ENCODE measurements at regions of chr9 and their contacts with region 1.

Region 1: DNA sequence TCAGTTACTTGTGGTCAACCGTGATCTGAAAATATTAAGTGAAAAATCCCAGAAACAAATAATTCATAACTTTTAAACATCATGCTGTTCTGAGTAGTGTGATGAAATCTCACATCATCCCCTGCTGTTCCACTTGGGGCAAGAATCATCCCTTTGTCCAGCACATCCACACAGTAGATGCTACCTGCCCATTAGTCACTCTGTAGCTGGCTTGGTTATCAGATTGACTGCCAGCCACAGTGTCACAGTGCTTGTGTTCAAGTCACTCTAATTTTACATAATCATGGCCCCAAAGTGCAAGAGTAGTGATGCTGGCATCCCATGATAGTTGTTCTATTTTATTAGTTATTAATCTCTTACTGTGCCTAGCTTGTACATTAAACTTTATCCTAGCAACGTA is 39.1 kb upstream of the CER1 start:
- DNase-seq: no peak
- ATAC-seq: no peak
- H3K4me3 ChIP-seq: no peak overlapping the region
- H3K27ac ChIP-seq: no peak overlapping the region
- H3K4me1 ChIP-seq: no peaks in the 10 kb centered on the region
- H3K27me3 ChIP-seq: no peaks in the 10 kb centered on the region; a peak in 1 of 4 replicates
- CTCF ChIP-seq: no peak
- EP300 ChIP-seq: no peak
- POLR2A ChIP-seq: no peak
- RAD21 ChIP-seq: no peak

Region 2: GRCh38 chr9:14466429-14466818 is 295.2 kb before region 1 on chr9:
- CTCF ChIA-PET with region 1: no interaction called
- POLR2A ChIA-PET with region 1: no interaction called
- RAD21 ChIA-PET with region 1: no interaction called
- SMC1A ChIA-PET with region 1: interaction called, 5 read pairs
- in situ Hi-C with region 1: loop called (anchors 5 kb)
- intact Hi-C with region 1: no loop called
- DNase-seq: no peak
- ATAC-seq: no peak
- H3K4me3 ChIP-seq: no peak overlapping the region
- H3K27ac ChIP-seq: no peak overlapping the region
- H3K4me1 ChIP-seq: no peaks in the 10 kb centered on the region
- H3K27me3 ChIP-seq: no peaks in the 10 kb centered on the region; a peak in 1 of 4 replicates
- CTCF ChIP-seq: no peak
- EP300 ChIP-seq: no peak
- POLR2A ChIP-seq: no peak
- RAD21 ChIP-seq: no peak

Region 3: DNA sequence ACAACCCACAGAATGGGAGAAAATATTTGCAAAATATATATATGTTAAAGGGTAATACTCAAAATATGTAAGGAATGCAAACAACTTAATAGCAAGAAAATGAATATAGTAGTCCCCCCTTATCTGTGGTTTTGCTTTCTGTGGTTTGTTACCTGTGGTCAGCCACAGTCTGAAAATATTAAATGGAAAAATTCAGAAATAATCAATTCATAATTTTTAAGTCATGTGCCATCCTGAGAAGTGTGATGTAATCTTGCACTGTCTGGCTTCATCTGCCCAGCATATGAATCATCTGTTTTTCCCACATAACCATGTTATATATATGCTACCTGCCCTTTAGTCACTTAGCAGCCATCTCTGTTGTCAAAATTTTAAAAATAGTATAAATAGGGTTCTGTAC is 50.8 kb before region 1 on chr9:
- CTCF ChIA-PET with region 1: no interaction called
- POLR2A ChIA-PET with region 1: no interaction called
- RAD21 ChIA-PET with region 1: no interaction called
- SMC1A ChIA-PET with region 1: no interaction called
- in situ Hi-C with region 1: no loop called
- intact Hi-C with region 1: no loop called
- DNase-seq: no peak
- ATAC-seq: no peak
- H3K4me3 ChIP-seq: no peak overlapping the region
- H3K27ac ChIP-seq: no peak overlapping the region
- H3K4me1 ChIP-seq: no peaks in the 10 kb centered on the region
- H3K27me3 ChIP-seq: no peaks in the 10 kb centered on the region
- CTCF ChIP-seq: no peak
- EP300 ChIP-seq: no peak
- POLR2A ChIP-seq: no peak
- RAD21 ChIP-seq: no peak